PC-9 (cell line): ENCODE measurements at regions of chr12 and their contacts with region 1.

Region 1: DNA sequence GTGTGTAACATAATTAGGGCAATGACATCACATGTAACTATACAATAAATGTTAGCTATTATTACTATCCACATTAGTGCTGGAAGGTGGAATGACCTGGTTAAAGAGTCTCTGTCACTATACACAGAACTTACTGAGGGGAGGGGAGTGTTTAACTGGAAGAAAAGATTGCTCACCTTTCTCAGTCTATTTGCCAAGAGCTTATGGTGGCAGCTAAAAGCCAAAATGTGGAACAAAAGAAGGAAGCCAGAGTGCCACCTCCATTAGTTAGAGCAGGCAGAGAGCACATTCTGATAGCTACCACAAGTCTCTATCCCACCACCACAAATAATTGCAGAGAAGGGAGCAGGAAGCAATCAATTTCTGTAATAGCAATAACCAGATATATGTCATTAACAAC is 124.4 kb downstream of the MED13L start:
- DNase-seq: no peak
- H3K4me3 ChIP-seq: no peak overlapping the region
- H3K27ac ChIP-seq: no peak overlapping the region
- H3K4me1 ChIP-seq: 0 out of 2 replicates have a peak, but pooled peaks cover 4% of the 10 kb centered on the region
- H3K27me3 ChIP-seq: no peaks in the 10 kb centered on the region
- CTCF ChIP-seq: no peak

Region 2: GRCh38 chr12:116104167-116104767 is 48.8 kb before region 1 on chr12:
- CTCF ChIA-PET with region 1: no interaction called
- POLR2A ChIA-PET with region 1: no interaction called
- intact Hi-C with region 1: no loop called
- DNase-seq: no peak
- H3K4me3 ChIP-seq: no peak overlapping the region
- H3K27ac ChIP-seq: no peak overlapping the region
- H3K4me1 ChIP-seq: no peaks in the 10 kb centered on the region
- H3K27me3 ChIP-seq: no peaks in the 10 kb centered on the region
- CTCF ChIP-seq: no peak

Region 3: GRCh38 chr12:116176216-116176615 is 23.1 kb after region 1 on chr12:
- CTCF ChIA-PET with region 1: no interaction called
- POLR2A ChIA-PET with region 1: interaction called, 40 read pairs
- intact Hi-C with region 1: no loop called
- DNase-seq: no peak
- H3K4me3 ChIP-seq: no peak overlapping the region
- H3K27ac ChIP-seq: no peak overlapping the region
- H3K4me1 ChIP-seq: peaks cover 12% of the 10 kb centered on the region; the same call in 1 of the 2 replicates
- H3K27me3 ChIP-seq: no peaks in the 10 kb centered on the region
- CTCF ChIP-seq: no peak